Activated CD4-positive, alpha-beta T cell treated with anti-CD3 and anti-CD28 coated beads for 36 hours (primary cell): ENCODE measurements at regions of chr17 and their contacts with region 1.

Region 1: GRCh38 chr17:49191917-49192741 is 18.2 kb downstream of the GNGT2 start:
- DNase-seq: peak; percentile 93
- ATAC-seq: peak; percentile 31
- H3K4me3 Mint-ChIP-seq: peak overlapping the region; percentile 90
- H3K27ac Mint-ChIP-seq: peak overlapping the region; percentile 97
- H3K4me1 Mint-ChIP-seq: peaks cover 31% of the 10 kb centered on the region
- H3K27me3 Mint-ChIP-seq: no peaks in the 10 kb centered on the region

Region 2: DNA sequence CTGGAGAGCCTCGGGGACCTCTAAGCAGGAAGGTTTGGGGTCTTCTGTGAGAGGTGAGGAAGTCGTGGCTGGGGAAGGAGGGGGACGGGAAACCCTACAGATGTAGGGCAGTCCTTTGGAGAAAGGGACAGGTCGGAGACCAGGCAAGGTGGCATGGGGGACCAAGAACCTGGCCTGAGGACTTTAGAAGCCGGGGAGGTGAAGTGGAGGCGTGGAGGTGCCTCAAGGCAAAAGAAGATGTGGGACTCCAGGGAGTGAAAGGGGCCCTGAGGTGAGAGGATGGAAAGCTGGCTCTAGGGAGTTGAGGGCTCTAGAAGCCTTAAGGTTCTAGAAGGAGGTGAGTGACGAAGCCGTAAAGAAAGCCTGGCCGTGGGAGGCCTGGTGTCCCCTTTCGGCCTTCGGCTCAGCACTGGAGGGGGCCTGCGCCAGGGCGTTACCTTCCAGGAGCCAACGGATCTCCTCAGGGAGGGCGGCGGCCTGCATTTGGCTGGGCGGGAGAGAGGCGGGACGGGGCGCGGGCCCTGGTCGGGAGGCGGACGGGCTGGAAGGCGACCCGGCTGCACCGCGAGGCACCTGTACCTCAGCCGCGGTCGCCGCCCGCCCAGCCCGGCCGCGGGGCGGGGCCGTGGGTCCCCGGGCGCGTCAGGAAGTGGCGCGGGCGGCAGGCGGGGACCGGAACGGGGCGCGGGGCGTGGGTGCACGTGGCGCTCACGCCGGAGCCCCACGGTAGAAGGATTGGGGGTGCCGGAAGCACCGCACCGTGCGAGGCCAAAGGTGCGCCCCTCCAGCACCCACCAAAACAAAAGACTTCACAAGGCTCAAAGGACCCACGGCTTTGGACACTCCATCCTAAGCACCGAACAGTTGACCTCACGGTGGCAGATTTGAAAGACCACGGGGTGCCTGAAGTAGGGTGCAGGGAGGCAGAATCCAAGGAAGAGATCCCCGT is 762.2 kb before region 1 on chr17 and contains the start of gene SKAP1:
- CTCF ChIA-PET with region 1: no interaction called
- POLR2A ChIA-PET with region 1: no interaction called
- intact Hi-C with region 1: loop called in 1 of 2 experiments (anchors 5 kb)
- DNase-seq: peak; percentile 77
- ATAC-seq: peak; percentile 62
- H3K4me3 Mint-ChIP-seq: peak within 1 kb of the TSS; percentile 94
- H3K27ac Mint-ChIP-seq: peak within 1 kb of the TSS; percentile 98
- H3K4me1 Mint-ChIP-seq: peaks cover 57% of the 10 kb centered on the region
- H3K27me3 Mint-ChIP-seq: no peaks in the 10 kb centered on the region
- total RNA-seq, gene SKAP1: 76.1 to 109 TPM

Region 3: DNA sequence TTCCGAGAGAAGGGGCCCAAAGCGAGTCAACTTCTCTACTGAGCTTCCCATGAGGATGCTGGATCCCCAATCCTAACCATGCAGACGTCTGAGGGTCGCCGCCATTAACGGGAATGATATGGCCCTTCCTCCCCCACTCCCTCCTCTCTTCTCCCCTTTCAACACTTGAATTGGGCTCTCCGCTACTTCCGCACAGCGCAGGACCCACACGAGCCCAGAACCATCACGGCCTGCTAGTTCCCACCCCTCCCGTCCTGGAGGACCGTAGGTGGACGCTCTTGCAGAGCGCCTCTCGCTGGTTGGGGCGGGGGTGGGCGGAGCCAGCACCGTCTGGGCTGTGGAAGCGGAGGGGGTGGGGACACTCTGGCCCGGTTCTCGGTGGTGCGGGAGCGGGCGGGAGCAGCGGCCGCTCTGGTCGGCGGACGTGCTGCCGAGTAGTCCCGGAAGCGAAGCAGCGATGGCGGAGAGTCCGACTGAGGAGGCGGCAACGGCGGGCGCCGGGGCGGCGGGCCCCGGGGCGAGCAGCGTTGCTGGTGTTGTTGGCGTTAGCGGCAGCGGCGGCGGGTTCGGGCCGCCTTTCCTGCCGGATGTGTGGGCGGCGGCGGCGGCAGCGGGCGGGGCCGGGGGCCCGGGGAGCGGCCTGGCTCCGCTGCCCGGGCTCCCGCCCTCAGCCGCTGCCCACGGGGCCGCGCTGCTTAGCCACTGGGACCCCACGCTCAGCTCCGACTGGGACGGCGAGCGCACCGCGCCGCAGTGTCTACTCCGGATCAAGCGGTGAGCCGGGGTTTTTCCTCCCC is 283.9 kb before region 1 on chr17 and contains the start of gene UBE2Z:
- CTCF ChIA-PET with region 1: no interaction called
- POLR2A ChIA-PET with region 1: no interaction called
- intact Hi-C with region 1: loop called in 1 of 2 experiments (anchors 1 kb)
- DNase-seq: peak; percentile 94
- ATAC-seq: peak; percentile 86
- H3K4me3 Mint-ChIP-seq: peak within 1 kb of the TSS; percentile 89
- H3K27ac Mint-ChIP-seq: peak within 1 kb of the TSS; percentile 97
- H3K4me1 Mint-ChIP-seq: peaks cover 46% of the 10 kb centered on the region
- H3K27me3 Mint-ChIP-seq: no peaks in the 10 kb centered on the region
- total RNA-seq, gene UBE2Z: 104 TPM

Region 4: GRCh38 chr17:49217651-49218413 is 25.7 kb after region 1 on chr17:
- CTCF ChIA-PET with region 1: interaction called, 13 read pairs
- POLR2A ChIA-PET with region 1: interaction called, 3 read pairs
- intact Hi-C with region 1: loop called (anchors 1 to 2 kb)
- DNase-seq: peak; percentile 66
- ATAC-seq: peak; percentile 73
- H3K4me3 Mint-ChIP-seq: peak overlapping the region; percentile 54
- H3K27ac Mint-ChIP-seq: peak overlapping the region; percentile 86
- H3K4me1 Mint-ChIP-seq: peaks cover 63% of the 10 kb centered on the region
- H3K27me3 Mint-ChIP-seq: no peaks in the 10 kb centered on the region

Region 5: GRCh38 chr17:49260011-49260921 is 68.1 kb after region 1 on chr17:
- CTCF ChIA-PET with region 1: interaction called, 3 read pairs
- POLR2A ChIA-PET with region 1: interaction called, 4 read pairs
- intact Hi-C with region 1: loop called in 1 of 2 experiments (anchors 2 kb)
- DNase-seq: peak; percentile 72
- ATAC-seq: peak; percentile 89
- H3K4me3 Mint-ChIP-seq: peak overlapping the region; percentile 70
- H3K27ac Mint-ChIP-seq: peak overlapping the region; percentile 82
- H3K4me1 Mint-ChIP-seq: peaks cover 7% of the 10 kb centered on the region
- H3K27me3 Mint-ChIP-seq: no peaks in the 10 kb centered on the region

Region 6: DNA sequence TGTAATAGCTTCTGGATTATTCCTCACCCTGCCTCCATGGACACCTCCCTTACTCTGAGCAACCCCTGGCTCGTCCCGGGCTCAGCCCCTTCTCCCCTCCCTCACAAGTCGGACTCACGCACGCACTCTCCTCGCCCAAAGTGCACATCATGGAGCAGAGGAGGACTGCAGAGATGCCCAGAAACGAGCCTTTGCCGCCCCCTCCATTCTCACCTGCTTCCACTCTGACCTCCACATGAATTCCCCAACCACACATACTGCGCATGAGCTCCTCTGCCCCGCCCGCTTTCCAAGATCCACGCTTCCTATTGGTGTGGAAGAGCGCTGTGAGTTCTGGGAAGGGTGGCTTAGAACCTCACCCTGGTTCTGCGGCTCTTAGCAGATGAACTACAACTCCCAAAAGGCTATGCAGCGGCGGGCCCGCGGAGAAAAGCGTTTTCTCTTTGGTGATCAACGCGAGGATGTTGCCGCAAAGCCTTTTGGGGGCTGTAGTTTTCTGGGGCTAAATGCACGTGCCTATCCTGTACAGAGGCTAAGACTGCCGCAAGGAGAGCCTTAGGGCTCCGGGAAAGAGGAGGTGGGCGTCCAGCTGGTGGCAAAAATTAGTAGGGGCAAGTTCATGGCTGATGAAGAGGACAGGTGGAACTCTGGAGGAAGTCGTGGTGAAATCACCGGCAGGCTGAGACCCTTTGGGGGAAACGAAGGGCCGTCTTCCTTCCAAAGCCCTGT is 222.7 kb after region 1 on chr17 and contains the start of gene PHB1:
- CTCF ChIA-PET with region 1: no interaction called
- POLR2A ChIA-PET with region 1: no interaction called
- intact Hi-C with region 1: loop called in 1 of 2 experiments (anchors 1 kb)
- DNase-seq: peak; percentile 98
- ATAC-seq: peak; percentile 100
- H3K4me3 Mint-ChIP-seq: peak within 1 kb of the TSS; percentile 100
- H3K27ac Mint-ChIP-seq: peak within 1 kb of the TSS; percentile 95
- H3K4me1 Mint-ChIP-seq: peaks cover 32% of the 10 kb centered on the region
- H3K27me3 Mint-ChIP-seq: no peaks in the 10 kb centered on the region
- total RNA-seq, gene PHB1: 346 to 350 TPM

Region 7: GRCh38 chr17:49739641-49740271 is 547.6 kb after region 1 on chr17:
- CTCF ChIA-PET with region 1: no interaction called
- POLR2A ChIA-PET with region 1: no interaction called
- intact Hi-C with region 1: loop called in 1 of 2 experiments (anchors 10 kb)
- DNase-seq: peak; percentile 90
- ATAC-seq: peak; percentile 88
- H3K4me3 Mint-ChIP-seq: peak overlapping the region; percentile 74
- H3K27ac Mint-ChIP-seq: peak overlapping the region; percentile 99
- H3K4me1 Mint-ChIP-seq: peaks cover 75% of the 10 kb centered on the region
- H3K27me3 Mint-ChIP-seq: no peaks in the 10 kb centered on the region